Right cardiac atrium (tissue), 5 donors: ENCODE measurements at regions of chr10 and their contacts with region 1.

Region 1: GRCh38 chr10:58384999-58385783 is at the start of gene TFAM:
- DNase-seq: peak; percentile 96 to 99 (median 98)
- ATAC-seq: peak; percentile 99
- H3K4me3 ChIP-seq: peak within 1 kb of the TSS; percentile 82
- H3K27ac ChIP-seq: peak within 1 kb of the TSS; percentile 88
- H3K4me1 ChIP-seq: no peaks in the 10 kb centered on the region
- H3K27me3 ChIP-seq: no peaks in the 10 kb centered on the region
- total RNA-seq, gene TFAM: 26.6 to 34.0 (median 30.0) TPM

Region 2: DNA sequence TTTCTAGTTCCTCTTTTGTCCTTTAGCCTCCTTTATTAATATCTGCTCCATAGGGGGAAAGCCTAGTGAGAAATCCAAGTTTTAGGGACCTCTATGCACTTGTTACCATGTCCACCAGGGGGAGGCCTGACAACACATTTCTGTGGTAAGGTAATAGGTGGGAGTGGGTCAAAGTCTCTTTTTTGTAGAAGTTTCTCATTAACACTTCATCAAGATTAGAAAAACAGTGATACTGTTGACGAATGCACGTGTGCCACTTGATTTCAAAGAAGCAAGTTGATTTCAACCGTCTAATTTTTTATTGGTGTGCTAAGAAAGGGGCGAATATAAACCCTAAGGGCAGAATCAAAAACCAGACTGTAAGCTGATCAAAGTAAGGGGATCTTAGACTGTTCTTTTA is 85.6 kb before region 1 on chr10:
- intact Hi-C with region 1: loop called in 1 of 4 experiments (anchors 10 kb)
- DNase-seq: peak in 2 of 3 donors; percentile 28 to 55
- ATAC-seq: peak; percentile 71 to 79
- H3K4me3 ChIP-seq: no peak overlapping the region
- H3K27ac ChIP-seq: no peak overlapping the region
- H3K4me1 ChIP-seq: no peaks in the 10 kb centered on the region
- H3K27me3 ChIP-seq: no peaks in the 10 kb centered on the region

Region 3: DNA sequence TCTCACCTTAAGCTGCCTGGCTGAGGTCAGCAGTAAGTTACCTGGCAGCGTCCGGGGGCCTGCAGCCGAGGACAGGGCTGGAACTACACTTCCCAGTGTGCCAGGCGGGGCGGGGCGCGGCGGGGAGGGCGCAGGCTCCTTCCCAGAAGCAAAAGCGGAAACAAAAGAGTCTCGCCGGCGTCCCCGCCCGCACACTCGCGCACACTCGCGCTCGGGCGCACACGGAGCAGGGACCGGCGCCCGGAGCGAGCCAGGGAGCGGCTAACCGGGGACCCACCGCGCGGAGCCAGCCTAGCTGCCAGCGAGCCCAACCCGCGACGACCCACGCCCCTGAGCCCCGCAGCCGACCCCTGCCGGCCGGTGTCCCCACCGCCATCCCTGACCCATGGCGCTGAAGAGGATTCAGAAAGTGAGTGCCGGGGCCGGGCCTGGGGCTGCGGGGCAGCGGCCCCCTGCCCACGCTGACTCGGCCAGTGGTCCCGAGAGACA is 50.3 kb before region 1 on chr10 and contains the start of gene UBE2D1:
- intact Hi-C with region 1: loop called in 2 of 4 experiments (anchors 2 to 5 kb)
- DNase-seq: peak; percentile 92 to 97 (median 96)
- ATAC-seq: peak; percentile 98 to 99
- H3K4me3 ChIP-seq: peak within 1 kb of the TSS; percentile 85
- H3K27ac ChIP-seq: peak within 1 kb of the TSS; percentile 93
- H3K4me1 ChIP-seq: no peaks in the 10 kb centered on the region
- H3K27me3 ChIP-seq: no peaks in the 10 kb centered on the region
- total RNA-seq, gene UBE2D1: 28.0 to 40.3 (median 33.1) TPM